ENCODE measurements at regions of chrX and their contacts with region 1.

Region 1: GRCh38 chrX:85544609-85545008 is 165.1 kb upstream of the POF1B start:
- DNase-seq: peak in 1 of 2 experiments; percentile 58
- H3K4me3 ChIP-seq: no peak overlapping the region
- H3K4me1 ChIP-seq: peaks cover 44% of the 10 kb centered on the region
- H3K27me3 ChIP-seq: no peaks in the 10 kb centered on the region

Region 2: GRCh38 chrX:85111347-85111746 is 433.3 kb before region 1 on chrX:
- in situ Hi-C with region 1: loop called (anchors 10 kb)
- DNase-seq: peak; percentile 47 to 60
- H3K4me3 ChIP-seq: no peak overlapping the region
- H3K4me1 ChIP-seq: peaks cover 45% of the 10 kb centered on the region
- H3K27me3 ChIP-seq: no peaks in the 10 kb centered on the region

Region 3: DNA sequence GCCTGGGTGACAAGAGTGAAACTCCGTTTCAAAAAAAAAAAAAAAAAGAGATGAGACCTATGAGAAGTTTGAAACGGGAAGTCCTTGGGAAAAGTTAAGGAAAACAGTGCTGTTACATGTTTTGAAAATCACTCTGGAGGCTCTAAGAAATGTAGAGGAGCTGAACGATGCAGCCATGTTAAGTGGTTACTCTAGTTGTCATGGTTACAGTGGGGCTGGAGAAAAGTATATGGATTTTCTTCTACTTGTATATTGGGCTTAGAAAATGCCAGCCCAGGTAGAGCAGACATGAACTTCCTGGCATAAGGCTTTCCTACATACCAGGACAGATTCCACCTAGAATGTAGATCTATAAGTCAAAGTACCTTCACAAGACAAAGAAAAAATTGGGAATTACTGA is 270.3 kb before region 1 on chrX:
- in situ Hi-C with region 1: loop called (anchors 25 kb)
- DNase-seq: no peak
- H3K4me3 ChIP-seq: no peak overlapping the region
- H3K4me1 ChIP-seq: no peaks in the 10 kb centered on the region
- H3K27me3 ChIP-seq: no peaks in the 10 kb centered on the region

Region 4: GRCh38 chrX:85326234-85327059 is 218.2 kb before region 1 on chrX:
- in situ Hi-C with region 1: no loop called
- DNase-seq: no peak
- H3K4me3 ChIP-seq: no peak overlapping the region
- H3K4me1 ChIP-seq: no peaks in the 10 kb centered on the region
- H3K27me3 ChIP-seq: no peaks in the 10 kb centered on the region